PC-3 (cell line): ENCODE measurements at regions of chr13 and their contacts with region 1.

Region 1: GRCh38 chr13:73335221-73335620 is 276.4 kb downstream of the KLF5 start:
- DNase-seq: peak; percentile 90
- ATAC-seq: peak; percentile 60
- H3K4me3 ChIP-seq: no peak overlapping the region
- H3K27ac ChIP-seq: peak overlapping the region; percentile 100
- H3K4me1 ChIP-seq: peaks cover 60% of the 10 kb centered on the region
- H3K27me3 ChIP-seq: no peaks in the 10 kb centered on the region
- CTCF ChIP-seq: no peak

Region 2: GRCh38 chr13:73138643-73139491 is 196.4 kb before region 1 on chr13:
- CTCF ChIA-PET with region 1: no interaction called
- POLR2A ChIA-PET with region 1: interaction called, 11 read pairs
- intact Hi-C with region 1: loop called (anchors 2 kb)
- DNase-seq: peak; percentile 83
- ATAC-seq: peak; percentile 90
- H3K4me3 ChIP-seq: peak overlapping the region; percentile 47; the same call in 1 of the 2 replicates
- H3K27ac ChIP-seq: peak overlapping the region; percentile 94
- H3K4me1 ChIP-seq: peaks cover 52% of the 10 kb centered on the region
- H3K27me3 ChIP-seq: no peaks in the 10 kb centered on the region
- CTCF ChIP-seq: no peak

Region 3: DNA sequence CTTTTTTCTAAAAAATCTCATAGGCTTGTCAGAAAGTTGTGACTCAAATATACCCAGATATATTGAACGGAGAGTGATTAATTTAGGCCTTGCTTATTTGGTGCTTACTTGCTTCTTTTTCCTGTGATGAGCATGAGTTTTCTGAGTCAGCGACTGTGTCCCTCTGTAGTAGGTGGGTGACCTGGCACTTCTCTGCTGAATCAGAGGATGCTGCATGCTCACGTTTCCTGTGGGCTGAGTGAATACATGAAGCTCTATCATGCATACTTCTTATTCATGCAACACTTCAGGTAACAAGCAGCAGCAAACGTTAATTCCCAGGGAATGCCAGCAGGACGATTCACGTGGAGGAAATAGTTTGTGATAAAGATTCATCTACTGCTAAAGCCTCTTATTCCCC is 31.4 kb before region 1 on chr13:
- CTCF ChIA-PET with region 1: no interaction called
- POLR2A ChIA-PET with region 1: no interaction called
- intact Hi-C with region 1: no loop called
- DNase-seq: peak; percentile 82
- ATAC-seq: peak; percentile 78
- H3K4me3 ChIP-seq: no peak overlapping the region
- H3K27ac ChIP-seq: peak overlapping the region; percentile 84
- H3K4me1 ChIP-seq: peaks cover 26% of the 10 kb centered on the region
- H3K27me3 ChIP-seq: no peaks in the 10 kb centered on the region
- CTCF ChIP-seq: no peak

Region 4: GRCh38 chr13:73411067-73411809 is 76.0 kb after region 1 on chr13:
- CTCF ChIA-PET with region 1: no interaction called
- POLR2A ChIA-PET with region 1: no interaction called
- intact Hi-C with region 1: loop called (anchors 1 kb)
- DNase-seq: peak; percentile 42
- ATAC-seq: peak; percentile 71
- H3K4me3 ChIP-seq: no peak overlapping the region
- H3K27ac ChIP-seq: peak overlapping the region; percentile 79
- H3K4me1 ChIP-seq: peaks cover 22% of the 10 kb centered on the region
- H3K27me3 ChIP-seq: no peaks in the 10 kb centered on the region
- CTCF ChIP-seq: no peak

Region 5: GRCh38 chr13:73451221-73452029 is 116.2 kb after region 1 on chr13:
- CTCF ChIA-PET with region 1: no interaction called
- POLR2A ChIA-PET with region 1: no interaction called
- intact Hi-C with region 1: loop called (anchors 2 kb)
- DNase-seq: peak; percentile 86
- ATAC-seq: peak; percentile 94
- H3K4me3 ChIP-seq: peak overlapping the region; percentile 7; the same call in 1 of the 2 replicates
- H3K27ac ChIP-seq: peak overlapping the region; percentile 98
- H3K4me1 ChIP-seq: peaks cover 40% of the 10 kb centered on the region
- H3K27me3 ChIP-seq: no peaks in the 10 kb centered on the region
- CTCF ChIP-seq: no peak

Region 6: DNA sequence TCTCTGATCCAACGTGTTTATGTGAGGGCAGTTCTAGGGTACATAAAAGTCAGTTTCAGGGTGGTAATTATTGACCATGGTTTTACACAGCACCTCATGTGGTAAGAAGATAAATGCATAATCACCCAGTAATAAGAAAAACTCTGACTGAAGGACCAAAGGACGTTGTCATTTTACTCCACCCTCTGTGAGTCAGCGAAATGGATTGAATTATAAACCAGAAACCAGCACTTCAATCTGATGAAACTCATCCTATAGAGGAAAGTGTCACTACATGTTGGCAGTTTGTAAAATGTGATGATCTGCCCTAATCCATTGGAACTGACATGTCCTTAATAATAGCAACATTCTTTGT is 130.4 kb after region 1 on chr13:
- CTCF ChIA-PET with region 1: no interaction called
- POLR2A ChIA-PET with region 1: no interaction called
- intact Hi-C with region 1: loop called (anchors 5 kb)
- DNase-seq: peak; percentile 85
- ATAC-seq: peak; percentile 84
- H3K4me3 ChIP-seq: no peak overlapping the region
- H3K27ac ChIP-seq: peak overlapping the region; percentile 97
- H3K4me1 ChIP-seq: peaks cover 31% of the 10 kb centered on the region
- H3K27me3 ChIP-seq: no peaks in the 10 kb centered on the region
- CTCF ChIP-seq: no peak

Region 7: GRCh38 chr13:73708393-73708985 is 373.3 kb after region 1 on chr13:
- CTCF ChIA-PET with region 1: no interaction called
- POLR2A ChIA-PET with region 1: no interaction called
- intact Hi-C with region 1: loop called (anchors 5 kb)
- DNase-seq: peak; percentile 77
- ATAC-seq: peak; percentile 81
- H3K4me3 ChIP-seq: no peak overlapping the region
- H3K27ac ChIP-seq: peak overlapping the region; percentile 54; the same call in 1 of the 2 replicates
- H3K4me1 ChIP-seq: no peaks in the 10 kb centered on the region
- H3K27me3 ChIP-seq: no peaks in the 10 kb centered on the region
- CTCF ChIP-seq: peak; percentile 89